ENCODE measurements at regions of chr1 and their contacts with region 1.

Region 1: GRCh38 chr1:28736450-28737306 is at the start of gene YTHDF2:
- DNase-seq: peak; percentile 99
- H3K4me3 Mint-ChIP-seq: peak within 1 kb of the TSS; percentile 100
- H3K27ac Mint-ChIP-seq: peak within 1 kb of the TSS; percentile 98
- H3K4me1 Mint-ChIP-seq: peaks cover 23% of the 10 kb centered on the region
- H3K27me3 Mint-ChIP-seq: no peaks in the 10 kb centered on the region
- total RNA-seq, gene YTHDF2: 90.8 and 92.6 TPM in 2 replicates

Region 2: GRCh38 chr1:28505406-28506187 is 231.1 kb before region 1 on chr1 and contains the start of gene RCC1:
- intact Hi-C with region 1: loop called (anchors 1 kb)
- DNase-seq: peak; percentile 99
- H3K4me3 Mint-ChIP-seq: peak within 1 kb of the TSS; percentile 92
- H3K27ac Mint-ChIP-seq: peak within 1 kb of the TSS; percentile 99
- H3K4me1 Mint-ChIP-seq: peaks cover 29% of the 10 kb centered on the region
- H3K27me3 Mint-ChIP-seq: peaks cover 2% of the 10 kb centered on the region
- total RNA-seq, gene RCC1: 143 and 145 TPM in 2 replicates

Region 3: GRCh38 chr1:28581536-28582247 is 155.0 kb before region 1 on chr1:
- intact Hi-C with region 1: loop called (anchors 2 kb)
- DNase-seq: peak; percentile 98
- H3K4me3 Mint-ChIP-seq: peak overlapping the region; percentile 94
- H3K27ac Mint-ChIP-seq: peak overlapping the region; percentile 97
- H3K4me1 Mint-ChIP-seq: peaks cover 29% of the 10 kb centered on the region
- H3K27me3 Mint-ChIP-seq: no peaks in the 10 kb centered on the region

Region 4: DNA sequence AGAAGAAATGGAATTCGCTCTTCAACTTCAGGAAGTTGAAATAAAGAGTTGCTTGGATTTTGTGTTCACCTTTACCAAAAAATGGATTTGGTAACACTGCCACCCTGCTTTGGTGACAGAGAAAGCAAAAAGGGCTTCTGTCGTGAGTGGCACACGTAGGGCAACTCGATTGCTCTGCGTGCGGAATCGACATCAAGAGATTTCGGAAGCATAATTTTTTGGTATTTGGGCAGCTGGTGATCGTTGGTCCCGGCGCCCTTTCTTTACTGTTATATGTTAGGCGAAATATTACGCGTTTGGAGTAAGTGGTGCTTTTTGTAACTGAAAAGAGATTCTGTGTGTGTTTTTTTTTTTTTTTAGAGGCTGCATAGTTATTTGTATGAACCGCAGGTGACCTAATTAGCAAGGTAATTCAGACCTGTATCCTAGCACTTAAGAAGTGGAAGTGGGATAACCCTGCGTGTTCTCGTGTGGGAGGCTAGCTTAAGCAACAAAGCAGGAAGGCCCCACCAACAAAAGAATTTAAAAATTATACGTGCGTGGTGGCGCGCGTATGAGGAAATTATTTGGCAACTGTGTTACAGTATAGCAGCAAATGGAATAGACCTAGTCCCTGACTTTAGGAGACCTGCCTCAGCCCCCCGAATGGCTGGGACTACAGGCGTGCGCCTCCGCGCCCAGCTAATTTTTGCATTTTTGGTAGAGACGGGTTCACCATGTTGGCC is 88.0 kb before region 1 on chr1 and contains the start of gene RNU11:
- intact Hi-C with region 1: loop called (anchors 1 kb)
- DNase-seq: peak; percentile 96
- H3K4me3 Mint-ChIP-seq: peak within 1 kb of the TSS; percentile 80
- H3K27ac Mint-ChIP-seq: peak within 1 kb of the TSS; percentile 97
- H3K4me1 Mint-ChIP-seq: peaks cover 28% of the 10 kb centered on the region
- H3K27me3 Mint-ChIP-seq: no peaks in the 10 kb centered on the region
- total RNA-seq, gene RNU11: not detected in 2 replicates

Region 5: GRCh38 chr1:28886731-28887418 is 150.2 kb after region 1 on chr1:
- intact Hi-C with region 1: loop called (anchors 1 kb)
- DNase-seq: peak; percentile 98
- H3K4me3 Mint-ChIP-seq: peak overlapping the region; percentile 89
- H3K27ac Mint-ChIP-seq: peak overlapping the region; percentile 92
- H3K4me1 Mint-ChIP-seq: peaks cover 50% of the 10 kb centered on the region
- H3K27me3 Mint-ChIP-seq: no peaks in the 10 kb centered on the region

Measured in activated CD4-positive, alpha-beta T cell treated with anti-CD3 and anti-CD28 coated beads, Interleukin-2, amount 10 ng/mL, durations not matched to agents 24 days and 14 days (primary cell).